Activated CD4-positive, alpha-beta T cell treated with anti-CD3 and anti-CD28 coated beads, Interleukin-2, amount 10 ng/mL, durations not matched to agents 24 days and 14 days (primary cell): ENCODE measurements at regions of chr11 and their contacts with region 1.

Region 1: DNA sequence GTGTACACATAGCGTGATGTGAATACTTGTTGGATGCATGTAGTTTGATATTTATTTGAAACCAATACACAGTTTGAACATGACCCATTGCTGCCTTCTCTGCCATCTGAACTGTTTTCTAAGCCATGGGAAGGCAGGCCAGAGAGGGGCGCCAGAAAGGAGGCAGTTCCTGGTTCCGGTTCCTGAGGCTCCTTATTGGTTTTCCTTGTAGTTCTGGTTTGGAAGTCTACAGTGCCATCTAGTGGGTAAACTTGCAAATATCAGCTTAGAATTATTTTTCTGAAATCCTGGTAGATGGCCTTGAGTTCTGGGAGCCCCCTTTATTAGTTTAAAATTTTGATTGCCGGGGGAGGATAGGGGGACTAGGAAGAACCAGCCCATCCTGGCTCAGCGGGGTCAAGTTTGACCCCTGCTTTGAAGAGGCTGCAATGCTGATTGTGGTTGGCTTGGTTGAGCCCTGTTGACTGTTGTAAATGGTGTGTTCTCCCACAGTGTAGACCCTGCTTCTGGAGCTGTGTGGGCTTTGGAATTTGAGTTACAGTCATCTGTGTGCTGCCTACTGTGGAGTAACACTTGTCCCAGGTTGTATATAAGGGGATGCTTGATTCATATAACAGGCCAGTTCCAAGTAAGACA is 48.4 kb downstream of the GRAMD1B start:
- DNase-seq: peak; percentile 81
- H3K4me3 Mint-ChIP-seq: peak overlapping the region; percentile 43
- H3K27ac Mint-ChIP-seq: peak overlapping the region; percentile 78
- H3K4me1 Mint-ChIP-seq: peaks cover 55% of the 10 kb centered on the region
- H3K27me3 Mint-ChIP-seq: no peaks in the 10 kb centered on the region

Region 2: DNA sequence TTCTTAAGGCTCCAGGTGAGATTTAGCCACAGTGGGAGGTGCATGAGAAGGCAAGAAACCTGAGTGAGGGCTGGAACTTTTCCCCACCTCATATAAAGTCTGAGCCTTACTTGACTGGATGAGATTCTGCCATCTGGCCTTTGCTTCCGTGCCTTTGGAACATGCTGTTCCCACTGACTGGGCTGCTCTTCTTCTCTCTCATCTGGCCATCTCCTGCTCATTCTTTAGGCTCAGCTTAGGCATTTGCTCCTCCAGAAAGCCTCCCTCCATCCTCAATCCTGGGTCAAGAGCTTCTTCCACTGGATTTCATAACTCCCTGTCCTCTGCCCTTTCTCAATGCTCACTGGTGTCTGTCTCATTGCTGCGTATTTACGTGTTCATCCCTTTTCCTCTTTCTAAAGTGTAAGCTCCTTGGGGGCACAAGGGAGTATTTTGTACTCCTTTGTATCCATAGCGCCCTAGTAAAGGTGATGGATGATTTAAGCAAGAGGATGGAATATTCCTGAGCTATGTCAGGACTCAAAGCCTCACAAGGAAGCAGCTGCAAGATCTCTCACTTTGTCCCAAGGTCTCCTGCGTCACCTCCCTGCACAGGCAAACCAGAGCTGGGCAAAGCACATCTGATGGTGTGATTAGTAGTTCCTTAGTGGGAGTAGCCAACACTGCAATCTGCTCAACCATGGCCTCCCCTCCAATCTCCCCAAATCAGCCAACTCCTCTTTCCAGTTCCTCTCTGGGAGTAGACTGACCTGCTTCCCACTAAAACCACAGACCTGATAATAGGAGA is 431.8 kb before region 1 on chr11:
- intact Hi-C with region 1: no loop called
- DNase-seq: no peak
- H3K4me3 Mint-ChIP-seq: no peak overlapping the region
- H3K27ac Mint-ChIP-seq: no peak overlapping the region
- H3K4me1 Mint-ChIP-seq: no peaks in the 10 kb centered on the region
- H3K27me3 Mint-ChIP-seq: peaks cover 10% of the 10 kb centered on the region

Region 3: DNA sequence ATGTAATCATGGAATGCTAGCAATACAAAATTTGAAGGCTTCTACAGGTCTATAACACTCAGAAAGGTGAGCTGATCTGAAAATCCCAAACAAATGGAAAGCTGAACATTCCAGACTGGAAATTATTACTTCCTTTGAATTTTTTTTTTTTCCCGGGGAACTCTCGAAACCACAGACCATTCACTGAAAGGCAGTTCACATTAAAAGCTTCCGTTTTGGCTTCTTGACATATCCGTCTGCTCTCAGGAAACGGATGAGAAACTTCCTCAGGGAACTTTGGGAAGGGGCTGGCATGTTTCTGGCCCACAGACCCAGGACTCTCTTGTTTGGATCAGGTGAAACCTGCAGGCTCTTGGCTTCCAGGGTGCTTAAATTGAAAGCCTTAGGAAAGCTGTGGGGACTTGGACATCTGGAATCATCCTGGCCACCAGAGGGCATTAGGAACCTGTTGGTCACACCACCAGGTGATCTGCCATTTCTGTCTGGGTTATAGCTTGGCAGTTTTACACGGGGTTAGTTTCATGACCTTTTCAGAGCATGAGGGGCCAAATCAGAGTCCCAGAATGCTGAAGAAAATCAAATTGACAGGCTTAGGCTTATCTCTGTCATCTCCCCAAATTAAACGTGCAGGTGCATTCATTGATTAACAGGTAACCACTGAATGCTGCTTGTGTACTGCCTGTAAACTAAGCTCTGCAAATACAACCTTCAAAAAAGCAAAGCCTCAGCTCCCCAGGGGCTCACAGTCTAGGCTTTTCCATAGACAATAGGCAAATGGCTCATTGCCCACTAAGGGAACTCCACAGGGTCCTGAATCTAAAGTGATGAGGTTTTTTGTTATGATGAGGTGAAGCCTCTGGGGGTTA is 71.1 kb before region 1 on chr11:
- intact Hi-C with region 1: loop called (anchors 1 kb)
- DNase-seq: peak; percentile 88
- H3K4me3 Mint-ChIP-seq: peak overlapping the region; percentile 85
- H3K27ac Mint-ChIP-seq: peak overlapping the region; percentile 77
- H3K4me1 Mint-ChIP-seq: peaks cover 53% of the 10 kb centered on the region
- H3K27me3 Mint-ChIP-seq: no peaks in the 10 kb centered on the region

Region 4: GRCh38 chr11:123421589-123421988 is 56.9 kb before region 1 on chr11:
- intact Hi-C with region 1: no loop called
- DNase-seq: no peak
- H3K4me3 Mint-ChIP-seq: no peak overlapping the region
- H3K27ac Mint-ChIP-seq: no peak overlapping the region
- H3K4me1 Mint-ChIP-seq: peaks cover 28% of the 10 kb centered on the region
- H3K27me3 Mint-ChIP-seq: no peaks in the 10 kb centered on the region

Region 5: DNA sequence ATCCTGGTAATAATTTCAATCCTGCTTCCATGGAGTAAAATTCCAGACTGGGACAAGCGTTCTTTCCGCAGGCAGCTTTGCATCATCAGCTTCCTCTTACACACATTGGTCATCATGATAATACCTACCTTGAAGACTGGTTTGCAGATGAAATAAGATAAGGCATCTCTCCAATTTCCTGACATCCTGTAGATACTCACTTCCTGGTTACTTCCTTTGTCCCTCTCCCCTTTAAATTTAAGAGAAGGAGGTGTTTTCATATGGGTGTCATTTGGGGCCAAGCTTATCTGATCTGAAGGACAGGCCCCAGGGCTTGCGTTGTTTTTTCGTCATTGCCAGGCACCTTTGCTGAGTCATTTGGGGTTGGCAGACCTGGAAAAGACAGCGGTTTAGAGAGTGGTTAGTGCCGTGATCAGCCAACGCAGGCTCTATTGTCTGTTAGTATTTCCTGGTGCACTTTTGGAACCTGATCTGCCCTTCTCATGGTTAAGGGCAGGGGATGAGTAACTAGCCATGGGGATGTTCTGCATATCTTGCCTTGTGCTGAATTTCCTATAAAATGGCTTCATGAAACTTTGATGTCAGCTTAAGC is 24.3 kb before region 1 on chr11:
- intact Hi-C with region 1: loop called (anchors 2 kb)
- DNase-seq: peak; percentile 91
- H3K4me3 Mint-ChIP-seq: peak overlapping the region; percentile 82
- H3K27ac Mint-ChIP-seq: peak overlapping the region; percentile 94
- H3K4me1 Mint-ChIP-seq: peaks cover 79% of the 10 kb centered on the region
- H3K27me3 Mint-ChIP-seq: no peaks in the 10 kb centered on the region